WTC11 (cell line): ENCODE measurements at regions of chr3 and their contacts with region 1.

Region 1: GRCh38 chr3:194472290-194472920 is 14.4 kb downstream of the ATP13A3 start:
- DNase-seq: no peak
- ATAC-seq: peak; percentile 77
- H3K4me3 Mint-ChIP-seq: no peak overlapping the region
- H3K27ac Mint-ChIP-seq: peak overlapping the region; percentile 63; the same call in 1 of the 2 replicates
- H3K4me1 Mint-ChIP-seq: peaks cover 32% of the 10 kb centered on the region
- H3K27me3 Mint-ChIP-seq: no peaks in the 10 kb centered on the region
- CTCF ChIP-seq: peak; percentile 80

Region 2: DNA sequence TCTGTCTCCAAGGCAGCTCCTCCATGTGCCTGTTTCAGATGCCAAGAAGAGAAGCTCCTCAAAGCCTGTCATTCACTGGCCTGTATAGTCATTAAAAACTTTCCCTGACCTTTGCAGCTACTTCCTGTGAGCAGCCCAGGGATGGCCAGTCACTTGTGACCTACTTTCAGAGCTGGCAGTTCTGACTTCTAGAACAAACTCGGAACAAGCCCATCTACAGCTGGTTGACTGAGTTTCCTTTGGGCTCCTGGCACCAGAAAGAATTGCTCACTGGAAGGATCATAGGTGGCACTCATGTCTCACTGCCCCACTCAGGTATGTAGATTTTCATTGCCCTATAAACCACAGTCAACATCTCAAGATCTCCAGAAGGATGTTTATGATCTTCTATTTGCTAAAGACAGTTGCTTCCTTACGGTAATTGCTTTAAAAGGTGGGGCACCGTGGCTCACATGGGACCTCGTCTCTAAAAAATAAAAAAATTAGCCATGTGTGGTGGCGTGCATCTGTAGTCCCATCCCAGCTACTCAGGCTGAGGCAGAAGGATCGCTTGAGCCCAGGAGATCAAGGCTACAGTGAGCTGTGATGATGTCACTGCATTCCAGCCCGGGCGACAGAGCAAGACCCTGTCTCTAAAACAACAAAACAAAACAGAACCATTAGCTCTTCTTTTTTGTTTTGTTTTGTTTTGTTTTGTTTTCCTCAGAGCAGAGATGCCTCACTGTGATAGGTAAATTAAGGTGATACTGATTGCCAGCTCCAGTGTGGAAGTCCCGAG is 25.6 kb after region 1 on chr3:
- CTCF ChIA-PET with region 1: interaction called, 17 read pairs
- POLR2A ChIA-PET with region 1: no interaction called
- DNase-seq: peak; percentile 16
- ATAC-seq: peak; percentile 78
- H3K4me3 Mint-ChIP-seq: no peak overlapping the region
- H3K27ac Mint-ChIP-seq: peak overlapping the region; percentile 54
- H3K4me1 Mint-ChIP-seq: peaks cover 9% of the 10 kb centered on the region
- H3K27me3 Mint-ChIP-seq: no peaks in the 10 kb centered on the region
- CTCF ChIP-seq: no peak

Region 3: GRCh38 chr3:194573691-194574437 is 101.5 kb after region 1 on chr3:
- CTCF ChIA-PET with region 1: interaction called, 27 read pairs
- POLR2A ChIA-PET with region 1: no interaction called
- DNase-seq: peak; percentile 40
- ATAC-seq: peak; percentile 94
- H3K4me3 Mint-ChIP-seq: no peak overlapping the region
- H3K27ac Mint-ChIP-seq: no peak overlapping the region
- H3K4me1 Mint-ChIP-seq: 0 out of 2 replicates have a peak, but pooled peaks cover 2% of the 10 kb centered on the region
- H3K27me3 Mint-ChIP-seq: no peaks in the 10 kb centered on the region
- CTCF ChIP-seq: 0 out of 2 replicates have a peak, but pooled peaks have one; percentile 17

Region 4: GRCh38 chr3:194592798-194593752 is 120.7 kb after region 1 on chr3:
- CTCF ChIA-PET with region 1: interaction called, 18 read pairs
- POLR2A ChIA-PET with region 1: no interaction called
- DNase-seq: no peak
- ATAC-seq: no peak
- H3K4me3 Mint-ChIP-seq: no peak overlapping the region
- H3K27ac Mint-ChIP-seq: no peak overlapping the region
- H3K4me1 Mint-ChIP-seq: no peaks in the 10 kb centered on the region
- H3K27me3 Mint-ChIP-seq: no peaks in the 10 kb centered on the region
- CTCF ChIP-seq: no peak